ENCODE measurements at regions of chr6 and their contacts with region 1.

Region 1: DNA sequence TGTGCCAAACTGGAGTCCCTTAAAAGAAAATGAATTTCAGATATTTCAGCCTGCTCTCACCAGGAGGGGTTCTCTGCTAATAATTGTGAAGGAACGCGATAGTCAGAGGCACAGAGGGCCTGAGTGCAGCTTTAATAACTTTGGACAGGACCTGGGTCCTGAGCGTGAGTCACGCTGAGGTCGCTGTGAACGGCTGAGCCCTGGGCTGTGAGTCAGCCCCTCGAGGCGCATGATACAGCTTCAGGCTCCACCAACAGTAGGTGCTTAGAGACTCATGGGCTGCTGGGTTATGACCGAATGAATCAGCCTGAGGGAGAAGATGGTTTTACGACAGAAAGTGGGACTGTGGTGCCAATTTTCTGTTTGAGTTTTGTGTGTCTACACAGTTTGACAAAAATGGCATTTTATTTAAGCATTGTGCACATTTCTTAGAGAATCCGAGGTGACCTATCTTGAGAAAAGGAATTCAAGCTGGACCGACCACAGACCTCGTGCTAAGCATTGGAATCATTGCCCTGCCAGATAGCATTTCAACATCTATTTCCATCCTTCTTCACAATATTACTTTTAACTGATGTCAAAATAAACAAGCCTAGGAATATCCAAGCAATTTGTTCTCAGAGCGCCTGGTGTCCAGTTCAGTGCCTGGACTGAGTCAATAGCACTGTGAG is 183.0 kb downstream of the THBS2 start:
- DNase-seq: peak; percentile 97
- H3K4me3 ChIP-seq: no peak overlapping the region
- H3K27ac ChIP-seq: peak overlapping the region; percentile 62 to 89 (median 79)
- H3K4me1 ChIP-seq: peaks cover 0 to 59% (median 53%) of the 10 kb centered on the region in 4 donors
- H3K27me3 ChIP-seq: no peaks in the 10 kb centered on the region
- CTCF ChIP-seq: peak in 1 of 4 experiments; percentile 4
- EP300 ChIP-seq: peak in 3 of 4 donors; percentile 7 to 87 (median 43)
- POLR2A ChIP-seq: no peak

Region 2: DNA sequence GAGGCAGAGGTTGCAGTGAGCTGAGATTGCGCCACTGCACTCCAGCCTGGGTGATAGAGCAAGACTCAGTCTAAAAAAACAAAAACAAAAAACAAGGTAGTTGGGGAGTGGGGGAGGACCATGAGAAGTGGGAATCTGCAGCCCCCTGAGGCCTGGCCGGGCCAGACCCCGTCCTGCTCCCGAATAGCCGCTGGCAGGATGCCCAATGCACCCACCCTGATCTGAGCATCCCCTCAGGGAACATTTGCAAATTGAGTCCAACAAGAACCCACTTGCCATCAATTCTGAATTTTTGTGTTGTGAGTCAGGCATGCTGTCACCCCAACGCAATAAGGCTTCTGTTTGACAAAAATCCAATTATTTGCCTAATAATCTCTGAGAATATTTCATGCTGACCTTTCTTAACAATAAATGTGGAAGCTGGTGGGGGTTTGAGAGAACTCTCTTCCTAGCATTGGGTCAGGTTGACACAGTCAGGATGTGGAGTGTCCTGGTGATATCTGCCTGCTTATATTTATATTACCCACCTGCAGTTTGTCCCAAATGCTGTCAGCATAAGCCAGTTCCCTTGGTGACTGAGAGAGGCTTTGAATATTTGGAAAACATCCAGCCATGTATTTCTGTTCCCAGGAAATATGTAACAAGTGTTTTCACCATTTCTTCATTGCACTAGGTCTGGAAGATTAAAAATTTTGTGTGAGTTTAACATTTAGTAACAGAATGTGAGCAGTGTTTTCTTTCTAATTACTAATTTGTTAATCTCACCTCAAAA is 963.2 kb before region 1 on chr6:
- intact Hi-C with region 1: no loop called
- DNase-seq: no peak
- H3K4me3 ChIP-seq: no peak overlapping the region
- H3K27ac ChIP-seq: no peak overlapping the region
- H3K4me1 ChIP-seq: peaks cover 0 to 12% (median 3%) of the 10 kb centered on the region in 4 donors
- H3K27me3 ChIP-seq: peaks cover 0 to 10% (median 1%) of the 10 kb centered on the region in 3 donors
- CTCF ChIP-seq: no peak
- EP300 ChIP-seq: no peak
- POLR2A ChIP-seq: no peak

Region 3: DNA sequence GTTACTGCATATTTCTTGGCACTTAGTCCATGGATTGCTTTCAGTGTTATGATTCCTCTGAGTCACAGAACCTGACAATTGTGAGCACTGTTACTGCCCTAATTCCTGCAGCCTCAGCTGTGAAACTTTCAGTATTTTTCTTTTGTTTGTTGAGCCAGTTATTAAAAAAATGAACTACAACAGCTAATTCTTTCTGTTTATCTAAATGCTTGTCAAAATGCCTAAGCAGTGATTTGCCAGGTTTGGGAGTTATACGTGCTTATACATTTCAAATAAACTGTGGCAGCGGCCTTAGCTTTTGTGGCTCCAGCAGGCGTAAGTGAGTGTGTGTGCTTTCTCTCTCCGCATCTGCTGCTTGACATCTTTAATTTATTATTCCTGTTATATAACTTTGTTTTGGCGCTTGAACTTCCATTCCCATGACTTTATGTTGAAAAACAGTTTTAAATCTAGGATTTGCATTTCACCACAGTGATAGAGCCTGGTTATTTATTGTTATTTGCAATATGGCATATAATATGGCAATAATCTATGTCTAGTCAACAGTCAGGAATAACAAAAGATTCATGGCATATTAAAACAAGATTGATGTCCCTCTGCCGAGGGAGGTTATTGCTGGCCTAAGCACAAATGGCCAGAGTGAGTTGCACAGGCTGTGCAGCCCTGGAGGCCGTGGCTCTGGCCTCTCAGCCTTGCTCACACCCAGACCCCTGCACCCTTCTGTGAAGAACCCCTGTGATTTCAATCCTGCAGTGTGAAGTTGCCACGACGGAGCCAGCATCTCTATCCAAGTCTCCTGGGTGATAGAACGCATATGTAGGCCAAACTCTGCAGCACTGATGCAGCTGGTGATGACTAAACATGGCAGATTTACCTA is 120.4 kb before region 1 on chr6:
- intact Hi-C with region 1: loop called (anchors 5 kb)
- DNase-seq: no peak
- H3K4me3 ChIP-seq: peak overlapping the region in 2 of 4 donors; percentile 21 to 24
- H3K27ac ChIP-seq: peak overlapping the region; percentile 57 to 84 (median 78)
- H3K4me1 ChIP-seq: peaks cover 0 to 60% (median 38%) of the 10 kb centered on the region in 4 donors
- H3K27me3 ChIP-seq: no peaks in the 10 kb centered on the region
- CTCF ChIP-seq: peak in 1 of 4 experiments; percentile 5
- EP300 ChIP-seq: peak in 3 of 4 donors; percentile 18 to 57 (median 32)
- POLR2A ChIP-seq: no peak

Region 4: GRCh38 chr6:168988801-168989200 is 81.8 kb before region 1 on chr6:
- intact Hi-C with region 1: loop called (anchors 10 kb)
- DNase-seq: peak; percentile 85
- H3K4me3 ChIP-seq: no peak overlapping the region
- H3K27ac ChIP-seq: peak overlapping the region; percentile 18 to 60 (median 56)
- H3K4me1 ChIP-seq: peaks cover 0 to 47% (median 38%) of the 10 kb centered on the region in 4 donors
- H3K27me3 ChIP-seq: no peaks in the 10 kb centered on the region
- CTCF ChIP-seq: no peak
- EP300 ChIP-seq: no peak
- POLR2A ChIP-seq: no peak

Region 5: DNA sequence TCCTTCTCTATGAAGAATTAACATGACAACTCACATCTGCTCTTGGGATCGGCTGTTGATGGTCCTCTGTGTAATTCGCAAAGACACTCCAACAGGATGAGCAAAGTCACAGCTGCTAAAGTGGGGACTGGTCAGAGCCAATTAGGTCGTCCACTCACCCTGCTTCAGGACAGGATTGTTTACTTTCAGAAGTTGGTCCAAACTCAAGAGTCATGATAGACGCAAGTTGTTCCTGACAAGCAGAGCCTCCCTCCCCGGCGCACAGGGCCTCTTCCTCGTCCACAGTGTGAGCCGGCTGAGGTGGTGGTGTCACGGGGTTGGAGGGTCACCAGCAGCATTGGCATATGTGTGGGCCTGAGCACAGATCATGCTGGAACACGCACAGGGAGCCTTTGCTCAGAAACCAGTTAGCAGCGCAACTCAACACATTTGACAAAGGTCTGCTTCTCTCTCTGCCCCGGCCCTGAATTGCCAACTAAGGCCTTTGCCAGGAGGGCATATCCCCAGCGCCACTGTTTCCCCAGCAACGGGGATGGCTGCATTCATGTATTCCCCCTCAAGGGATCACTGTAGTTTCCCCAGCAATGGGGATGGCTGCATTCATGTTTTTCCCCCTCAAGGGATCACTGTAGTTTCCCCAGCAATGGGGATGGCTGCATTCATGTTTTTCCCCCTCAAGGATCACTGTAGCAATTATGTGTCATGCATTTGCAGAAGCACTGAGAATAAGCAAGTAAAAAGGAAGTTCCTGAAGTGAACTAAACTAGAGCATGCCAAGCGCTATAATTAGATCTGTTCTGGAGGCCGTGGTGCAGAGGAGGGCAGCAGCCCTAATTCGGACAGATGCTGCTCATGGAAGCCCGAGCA is 71.3 kb after region 1 on chr6:
- intact Hi-C with region 1: loop called (anchors 5 kb)
- DNase-seq: peak; percentile 92
- H3K4me3 ChIP-seq: no peak overlapping the region
- H3K27ac ChIP-seq: peak overlapping the region; percentile 60 to 76 (median 71)
- H3K4me1 ChIP-seq: peaks cover 0 to 46% (median 36%) of the 10 kb centered on the region in 4 donors
- H3K27me3 ChIP-seq: no peaks in the 10 kb centered on the region
- CTCF ChIP-seq: no peak
- EP300 ChIP-seq: peak in 1 of 4 donors; percentile 10
- POLR2A ChIP-seq: no peak

Region 6: DNA sequence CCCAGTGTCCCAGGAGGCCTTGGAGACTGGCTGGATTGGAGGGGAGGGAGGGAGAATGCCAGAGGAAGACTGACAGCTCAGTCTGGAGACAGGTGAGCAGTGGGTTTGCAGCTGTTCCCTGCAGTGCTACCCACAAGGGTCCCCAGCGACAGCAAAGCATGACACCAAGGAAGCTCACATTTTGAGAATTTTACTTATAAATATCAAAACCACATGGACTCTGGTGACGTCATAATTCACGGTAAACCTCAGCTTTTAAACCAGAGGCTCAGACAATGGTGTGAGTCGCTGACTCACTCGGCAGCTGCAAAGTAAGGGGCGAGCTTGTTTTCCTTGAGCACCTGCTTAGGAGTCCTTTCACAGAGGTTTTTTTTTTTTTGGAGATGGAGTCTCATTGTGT is 117.8 kb after region 1 on chr6:
- intact Hi-C with region 1: no loop called
- DNase-seq: no peak
- H3K4me3 ChIP-seq: no peak overlapping the region
- H3K27ac ChIP-seq: no peak overlapping the region
- H3K4me1 ChIP-seq: peaks cover 0 to 21% (median 2%) of the 10 kb centered on the region in 4 donors
- H3K27me3 ChIP-seq: no peaks in the 10 kb centered on the region
- CTCF ChIP-seq: no peak
- EP300 ChIP-seq: no peak
- POLR2A ChIP-seq: no peak

Region 7: GRCh38 chr6:169529931-169530751 is 459.5 kb after region 1 on chr6:
- intact Hi-C with region 1: loop called (anchors 10 kb)
- DNase-seq: peak; percentile 89
- H3K4me3 ChIP-seq: no peak overlapping the region
- H3K27ac ChIP-seq: peak overlapping the region; percentile 58 to 82 (median 78)
- H3K4me1 ChIP-seq: peaks cover 0 to 39% (median 28%) of the 10 kb centered on the region in 4 donors
- H3K27me3 ChIP-seq: no peaks in the 10 kb centered on the region
- CTCF ChIP-seq: no peak
- EP300 ChIP-seq: peak in 3 of 4 donors; percentile 78 to 92 (median 91)
- POLR2A ChIP-seq: no peak

Measured in sigmoid colon (tissue), 7 donors.